HepG2 (cell line): ENCODE measurements at regions of chr11 and their contacts with region 1.

Region 1: DNA sequence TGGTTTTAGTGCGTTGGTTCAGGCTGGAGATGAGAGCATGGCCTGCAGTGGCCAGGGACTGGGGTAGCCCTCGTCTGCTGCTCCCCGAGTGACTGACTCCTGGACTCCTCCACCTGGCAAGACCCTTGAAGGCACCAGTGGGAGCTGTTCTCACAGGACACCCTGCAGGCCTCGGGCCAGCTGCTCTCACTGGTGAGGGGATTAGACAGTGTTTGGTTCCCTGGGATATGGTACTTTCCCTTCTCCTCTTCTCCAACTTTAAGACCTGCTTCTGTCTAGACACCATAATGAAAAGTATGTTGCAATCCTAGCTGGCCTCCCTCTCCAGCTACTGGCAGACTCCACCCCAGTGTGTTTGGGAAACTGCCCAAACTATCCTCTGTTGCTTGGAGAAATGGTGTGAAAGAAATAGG is 168.8 kb upstream of the CADM1 start:
- DNase-seq: no peak
- ATAC-seq: no peak
- H3K4me3 ChIP-seq: no peak overlapping the region
- H3K27ac ChIP-seq: no peak overlapping the region
- H3K4me1 ChIP-seq: no peaks in the 10 kb centered on the region
- H3K27me3 ChIP-seq: peaks cover 1 to 12% of the 10 kb centered on the region in 2 experiments; a peak in 2 of 5 replicates
- CTCF ChIP-seq: no peak
- EP300 ChIP-seq: no peak
- POLR2A ChIP-seq: no peak
- RAD21 ChIP-seq: no peak

Region 2: GRCh38 chr11:115334932-115335788 is 337.8 kb before region 1 on chr11:
- CTCF ChIA-PET with region 1: no interaction called
- POLR2A ChIA-PET with region 1: no interaction called
- in situ Hi-C with region 1: loop called (anchors 10 kb)
- intact Hi-C with region 1: no loop called
- DNase-seq: peak; percentile 19
- ATAC-seq: no peak
- H3K4me3 ChIP-seq: no peak overlapping the region
- H3K27ac ChIP-seq: no peak overlapping the region
- H3K4me1 ChIP-seq: peaks cover 9% of the 10 kb centered on the region; the same call in 1 of the 2 replicates
- H3K27me3 ChIP-seq: peaks cover 0 to 1% of the 10 kb centered on the region in 2 experiments; a peak in 1 of 5 replicates
- CTCF ChIP-seq: peak; percentile 58
- EP300 ChIP-seq: no peak
- POLR2A ChIP-seq: no peak
- RAD21 ChIP-seq: 0 out of 2 replicates have a peak, but pooled peaks have one; percentile 56

Region 3: GRCh38 chr11:115548878-115549528 is 124.0 kb before region 1 on chr11:
- CTCF ChIA-PET with region 1: no interaction called
- POLR2A ChIA-PET with region 1: no interaction called
- in situ Hi-C with region 1: no loop called
- intact Hi-C with region 1: loop called (anchors 10 kb)
- DNase-seq: peak; percentile 95
- ATAC-seq: peak; percentile 93
- H3K4me3 ChIP-seq: peak overlapping the region in 1 of 3 experiments; percentile 32; a peak in 1 of 6 replicates
- H3K27ac ChIP-seq: peak overlapping the region; percentile 59
- H3K4me1 ChIP-seq: peaks cover 47% of the 10 kb centered on the region
- H3K27me3 ChIP-seq: peaks cover 1 to 5% of the 10 kb centered on the region in 2 experiments; a peak in 1 of 5 replicates
- CTCF ChIP-seq: peak; percentile 75
- EP300 ChIP-seq: peak in 1 of 2 experiments; percentile 67; a peak in 2 of 4 replicates
- POLR2A ChIP-seq: no peak
- RAD21 ChIP-seq: no peak

Region 4: GRCh38 chr11:116062490-116063171 is 389.6 kb after region 1 on chr11:
- CTCF ChIA-PET with region 1: no interaction called
- POLR2A ChIA-PET with region 1: no interaction called
- in situ Hi-C with region 1: no loop called
- intact Hi-C with region 1: no loop called
- DNase-seq: no peak
- ATAC-seq: no peak
- H3K4me3 ChIP-seq: no peak overlapping the region
- H3K27ac ChIP-seq: no peak overlapping the region
- H3K4me1 ChIP-seq: no peaks in the 10 kb centered on the region
- H3K27me3 ChIP-seq: peaks cover 2 to 14% of the 10 kb centered on the region in 2 experiments; a peak in 3 of 5 replicates
- CTCF ChIP-seq: no peak
- EP300 ChIP-seq: no peak
- POLR2A ChIP-seq: no peak
- RAD21 ChIP-seq: no peak

Region 5: DNA sequence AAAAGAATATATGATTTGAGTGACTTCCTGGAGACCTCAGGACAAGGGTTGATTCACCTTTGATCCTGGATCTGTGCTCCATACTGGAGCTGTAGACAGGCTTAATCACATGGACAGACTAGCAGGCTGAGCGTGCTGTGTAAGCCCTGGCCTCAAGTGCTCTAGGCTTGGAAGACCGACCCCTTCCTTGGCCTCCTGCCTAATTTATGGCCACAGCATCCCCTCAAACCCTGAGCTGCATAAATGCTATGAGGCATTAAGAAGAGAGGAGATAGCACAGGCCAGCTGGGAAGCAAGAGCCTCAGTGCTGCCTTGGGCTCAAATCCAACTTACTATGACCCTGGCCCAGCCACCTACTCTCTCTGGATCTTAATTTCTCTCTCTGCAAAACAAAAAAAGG is 714.6 kb after region 1 on chr11:
- CTCF ChIA-PET with region 1: no interaction called
- POLR2A ChIA-PET with region 1: no interaction called
- in situ Hi-C with region 1: no loop called
- intact Hi-C with region 1: no loop called
- DNase-seq: no peak
- ATAC-seq: no peak
- H3K4me3 ChIP-seq: no peak overlapping the region
- H3K27ac ChIP-seq: no peak overlapping the region
- H3K4me1 ChIP-seq: peaks cover 22% of the 10 kb centered on the region
- H3K27me3 ChIP-seq: no peaks in the 10 kb centered on the region; a peak in 1 of 5 replicates
- CTCF ChIP-seq: no peak
- EP300 ChIP-seq: no peak
- POLR2A ChIP-seq: no peak
- RAD21 ChIP-seq: no peak